Aorta (tissue), 5 donors: ENCODE measurements at regions of chr11 and their contacts with region 1.

Region 1: GRCh38 chr11:33039274-33040032 is at the start of gene TCP11L1:
- DNase-seq: peak; percentile 96 to 98
- ATAC-seq: peak; percentile 96
- H3K4me3 ChIP-seq: peak within 1 kb of the TSS; percentile 16 to 89
- H3K27ac ChIP-seq: peak within 1 kb of the TSS; percentile 14 to 43
- H3K4me1 ChIP-seq: peaks cover 0 to 8% of the 10 kb centered on the region in 2 donors
- H3K27me3 ChIP-seq: no peaks in the 10 kb centered on the region
- total RNA-seq, gene TCP11L1: 35.2 to 39.4 TPM

Region 2: DNA sequence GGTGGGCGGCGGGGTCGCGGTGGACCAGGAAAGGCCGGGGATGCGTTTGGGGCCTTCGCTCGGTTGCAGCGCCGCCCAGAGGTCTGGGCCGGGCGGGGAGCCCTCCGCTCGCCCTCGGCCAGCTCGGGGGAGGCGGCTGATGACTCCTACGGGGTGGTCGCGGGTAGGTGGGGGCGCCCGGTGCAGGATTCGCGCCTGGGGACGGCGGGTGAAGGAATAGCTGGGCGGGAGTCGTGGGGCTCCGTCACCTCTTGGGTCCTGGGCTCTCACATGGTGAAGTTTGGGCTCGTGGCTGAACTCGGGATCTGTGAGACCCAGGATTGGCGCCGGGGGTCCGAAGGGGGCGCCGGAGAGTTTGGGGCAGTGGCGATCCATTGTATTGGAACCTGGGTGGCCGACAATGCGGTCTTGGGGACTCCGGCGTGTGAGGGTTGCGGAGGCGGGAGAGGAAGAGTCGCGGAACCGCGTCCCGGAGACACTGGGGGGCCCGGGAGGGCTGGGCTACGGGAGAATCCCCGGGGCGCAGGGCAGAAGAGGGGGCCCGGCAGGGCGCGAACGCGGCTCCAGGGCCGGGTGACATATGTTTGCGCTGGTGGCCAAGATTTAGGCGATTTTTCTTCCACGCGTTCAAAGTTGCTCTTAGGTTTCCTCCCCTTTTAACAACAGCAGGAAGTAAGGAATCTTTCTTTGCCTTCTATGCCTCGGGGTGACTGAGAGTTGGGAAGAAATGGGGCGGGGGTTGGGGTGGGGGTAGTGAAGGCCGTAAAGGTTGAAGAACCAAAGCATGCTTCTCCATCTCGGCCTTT is 145.9 kb before region 1 on chr11:
- intact Hi-C with region 1: loop called in 1 of 2 experiments (anchors 10 kb)
- DNase-seq: peak; percentile 64 to 76
- ATAC-seq: peak; percentile 81
- H3K4me3 ChIP-seq: peak overlapping the region; percentile 96 to 99
- H3K27ac ChIP-seq: peak overlapping the region; percentile 20 to 52
- H3K4me1 ChIP-seq: peaks cover 0 to 3% of the 10 kb centered on the region in 2 donors
- H3K27me3 ChIP-seq: no peaks in the 10 kb centered on the region

Region 3: GRCh38 chr11:33015621-33016551 is 23.6 kb before region 1 on chr11 and contains the start of gene DEPDC7:
- intact Hi-C with region 1: loop called in 1 of 2 experiments (anchors 2 kb)
- DNase-seq: peak; percentile 91 to 94
- ATAC-seq: peak; percentile 96
- H3K4me3 ChIP-seq: peak within 1 kb of the TSS; percentile 44 to 67
- H3K27ac ChIP-seq: no peak within 1 kb of the TSS
- H3K4me1 ChIP-seq: no peaks in the 10 kb centered on the region
- H3K27me3 ChIP-seq: no peaks in the 10 kb centered on the region
- total RNA-seq, gene DEPDC7: 0.78 to 2.6 TPM

Region 4: DNA sequence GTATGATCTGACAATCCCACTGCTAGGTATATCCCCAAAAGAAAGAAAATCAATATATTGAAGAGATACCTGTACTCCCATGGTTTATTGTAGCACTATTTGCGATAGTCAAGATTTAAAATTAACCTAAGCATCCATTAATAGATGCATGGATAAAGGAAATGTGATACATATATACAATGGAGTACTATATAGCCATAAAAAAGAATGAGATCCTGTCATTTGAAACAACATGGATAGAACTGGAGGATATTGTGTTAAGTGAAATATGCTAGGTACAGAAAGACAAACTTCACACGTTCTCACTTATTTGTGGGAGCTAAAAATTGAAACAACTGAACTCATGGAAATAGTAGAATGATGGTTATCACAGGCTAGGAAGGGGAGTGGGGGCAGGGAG is 203.1 kb after region 1 on chr11:
- intact Hi-C with region 1: no loop called
- DNase-seq: no peak
- ATAC-seq: no peak
- H3K4me3 ChIP-seq: no peak overlapping the region
- H3K27ac ChIP-seq: no peak overlapping the region
- H3K4me1 ChIP-seq: no peaks in the 10 kb centered on the region
- H3K27me3 ChIP-seq: no peaks in the 10 kb centered on the region